BJ (cell line): ENCODE measurements at regions of chr6 and their contacts with region 1.

Region 1: GRCh38 chr6:35601331-35602132 is 87.2 kb downstream of the FKBP5 start:
- DNase-seq: peak; percentile 50
- H3K4me3 ChIP-seq: no peak overlapping the region
- H3K27me3 ChIP-seq: no peaks in the 10 kb centered on the region
- CTCF ChIP-seq: no peak

Region 2: GRCh38 chr6:33983105-33983716 is 1618.3 kb before region 1 on chr6:
- CTCF ChIA-PET with region 1: no interaction called
- POLR2A ChIA-PET with region 1: no interaction called
- DNase-seq: no peak
- H3K4me3 ChIP-seq: no peak overlapping the region
- H3K27me3 ChIP-seq: peaks cover 2% of the 10 kb centered on the region; the same call in 1 of the 2 replicates
- CTCF ChIP-seq: no peak

Region 3: DNA sequence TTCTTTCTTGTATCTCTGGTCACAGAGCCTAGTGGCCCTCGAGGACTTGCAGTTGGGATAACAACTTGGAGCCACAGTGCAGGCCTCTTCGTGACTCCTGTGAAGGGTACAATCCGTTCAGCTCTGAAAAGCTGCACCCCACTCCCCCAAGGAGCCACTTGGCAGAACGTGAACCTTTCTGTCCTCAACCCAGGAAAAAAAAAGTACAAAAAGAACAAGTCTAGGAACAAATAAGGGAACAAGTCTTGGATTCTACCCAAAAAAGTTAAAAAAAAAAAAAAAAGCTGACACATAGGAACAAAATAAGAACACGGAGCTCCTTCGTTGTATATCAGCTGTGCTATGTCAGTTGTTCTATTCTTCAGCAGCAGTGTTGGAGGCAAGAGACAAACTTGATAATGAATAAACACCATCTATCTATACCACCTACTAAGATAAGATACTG is 10.9 kb before region 1 on chr6:
- CTCF ChIA-PET with region 1: interaction called, 5 read pairs
- POLR2A ChIA-PET with region 1: interaction called, 10 read pairs
- DNase-seq: no peak
- H3K4me3 ChIP-seq: no peak overlapping the region
- H3K27me3 ChIP-seq: no peaks in the 10 kb centered on the region
- CTCF ChIP-seq: no peak